AG04450 (cell line): ENCODE measurements at regions of chr15 and their contacts with region 1.

Region 1: DNA sequence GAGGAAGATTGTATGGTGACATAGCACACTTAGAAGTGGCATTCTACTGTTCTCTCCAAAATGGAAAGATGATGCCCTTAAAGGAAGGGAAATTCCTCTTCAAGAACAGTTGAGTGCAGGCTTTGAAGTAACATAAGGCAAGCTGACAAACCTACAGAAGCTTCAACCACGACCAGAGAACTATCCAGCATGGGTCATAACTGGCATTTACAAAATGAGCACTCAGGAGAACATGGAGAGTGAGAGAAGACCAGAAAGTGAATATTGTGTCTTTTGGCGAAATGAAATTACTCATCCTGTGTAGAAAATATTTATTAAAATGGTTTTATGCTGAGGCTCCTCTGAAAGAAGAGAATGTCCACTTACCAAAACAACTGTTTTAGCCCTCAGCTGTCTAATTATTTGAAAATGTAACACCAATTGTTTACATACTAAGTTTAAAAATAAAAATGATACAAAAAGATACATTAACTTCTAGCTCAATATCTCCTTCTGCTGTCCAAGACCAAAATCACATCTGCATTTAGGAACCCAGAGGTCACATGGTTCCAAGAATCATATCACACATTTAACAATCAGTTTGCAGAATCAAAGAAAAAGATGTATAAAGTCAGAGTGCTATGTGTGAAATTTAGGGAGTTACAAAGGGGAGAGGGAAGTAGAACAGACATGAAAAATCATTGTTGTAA is 216.9 kb downstream of the ATP8B4 start:
- DNase-seq: no peak
- H3K4me3 ChIP-seq: no peak overlapping the region
- H3K27ac ChIP-seq: peak overlapping the region; percentile 40
- H3K27me3 ChIP-seq: no peaks in the 10 kb centered on the region
- CTCF ChIP-seq: peak; percentile 62

Region 2: GRCh38 chr15:49675041-49675440 is 227.1 kb before region 1 on chr15:
- CTCF ChIA-PET with region 1: no interaction called
- POLR2A ChIA-PET with region 1: no interaction called
- DNase-seq: peak; percentile 55
- H3K4me3 ChIP-seq: no peak overlapping the region
- H3K27ac ChIP-seq: no peak overlapping the region
- H3K27me3 ChIP-seq: no peaks in the 10 kb centered on the region
- CTCF ChIP-seq: peak; percentile 49

Region 3: GRCh38 chr15:50051803-50052419 is 149.8 kb after region 1 on chr15:
- CTCF ChIA-PET with region 1: interaction called, 14 read pairs
- POLR2A ChIA-PET with region 1: interaction called, 3 read pairs
- DNase-seq: peak; percentile 61
- H3K4me3 ChIP-seq: no peak overlapping the region
- H3K27ac ChIP-seq: no peak overlapping the region
- H3K27me3 ChIP-seq: no peaks in the 10 kb centered on the region
- CTCF ChIP-seq: peak; percentile 85